ENCODE measurements at regions of chr19 and their contacts with region 1.

Region 1: GRCh38 chr19:488505-489417 is 7.5 kb upstream of the MADCAM1 start:
- DNase-seq: peak; percentile 88 to 99 (median 97)

Region 2: DNA sequence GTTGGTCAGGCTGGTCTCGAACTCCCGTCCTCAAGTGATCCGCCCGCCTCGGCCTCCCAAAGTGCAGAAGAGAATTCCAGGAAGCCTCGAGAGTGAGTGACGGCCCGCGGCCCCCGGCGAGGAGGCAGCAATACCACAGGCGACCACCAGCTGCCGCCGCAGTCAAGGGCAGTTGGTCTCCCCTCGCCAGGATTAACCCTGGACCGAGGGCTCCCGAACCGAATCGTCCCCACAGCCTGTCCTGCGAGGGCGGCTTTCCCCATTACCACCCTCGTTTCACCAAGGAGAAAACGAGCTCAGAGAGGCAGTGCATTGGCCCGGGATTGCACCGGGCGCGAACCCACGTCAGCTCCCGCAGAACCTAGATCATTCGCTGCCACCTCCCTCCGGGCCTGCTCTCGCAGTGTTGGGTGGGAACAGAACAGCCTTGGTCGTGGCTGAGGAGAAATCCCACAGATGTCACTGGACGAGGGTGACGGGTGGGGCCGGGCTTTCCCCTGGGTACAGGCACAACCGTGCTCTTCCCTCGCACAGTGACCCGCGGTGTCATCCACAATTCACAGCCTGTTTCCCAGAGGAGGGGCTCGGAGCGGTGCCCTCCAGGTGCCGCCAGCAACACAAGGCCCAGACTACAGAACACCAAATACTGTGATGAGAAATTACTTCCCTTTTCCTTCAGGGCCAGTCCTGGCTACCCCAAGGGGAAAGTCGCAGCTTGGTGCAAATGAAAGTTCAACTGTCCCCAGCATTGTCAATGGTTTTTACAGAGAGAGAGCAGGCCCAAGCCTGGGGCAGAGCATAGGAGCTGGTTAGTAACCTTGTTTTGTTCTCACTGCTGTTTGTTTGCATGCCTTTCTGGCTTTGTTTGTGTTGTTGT is 104.6 kb before region 1 on chr19:
- intact Hi-C with region 1: loop called (anchors 10 kb)
- DNase-seq: peak in 37 of 42 donors; percentile 16 to 79 (median 46)

Region 3: DNA sequence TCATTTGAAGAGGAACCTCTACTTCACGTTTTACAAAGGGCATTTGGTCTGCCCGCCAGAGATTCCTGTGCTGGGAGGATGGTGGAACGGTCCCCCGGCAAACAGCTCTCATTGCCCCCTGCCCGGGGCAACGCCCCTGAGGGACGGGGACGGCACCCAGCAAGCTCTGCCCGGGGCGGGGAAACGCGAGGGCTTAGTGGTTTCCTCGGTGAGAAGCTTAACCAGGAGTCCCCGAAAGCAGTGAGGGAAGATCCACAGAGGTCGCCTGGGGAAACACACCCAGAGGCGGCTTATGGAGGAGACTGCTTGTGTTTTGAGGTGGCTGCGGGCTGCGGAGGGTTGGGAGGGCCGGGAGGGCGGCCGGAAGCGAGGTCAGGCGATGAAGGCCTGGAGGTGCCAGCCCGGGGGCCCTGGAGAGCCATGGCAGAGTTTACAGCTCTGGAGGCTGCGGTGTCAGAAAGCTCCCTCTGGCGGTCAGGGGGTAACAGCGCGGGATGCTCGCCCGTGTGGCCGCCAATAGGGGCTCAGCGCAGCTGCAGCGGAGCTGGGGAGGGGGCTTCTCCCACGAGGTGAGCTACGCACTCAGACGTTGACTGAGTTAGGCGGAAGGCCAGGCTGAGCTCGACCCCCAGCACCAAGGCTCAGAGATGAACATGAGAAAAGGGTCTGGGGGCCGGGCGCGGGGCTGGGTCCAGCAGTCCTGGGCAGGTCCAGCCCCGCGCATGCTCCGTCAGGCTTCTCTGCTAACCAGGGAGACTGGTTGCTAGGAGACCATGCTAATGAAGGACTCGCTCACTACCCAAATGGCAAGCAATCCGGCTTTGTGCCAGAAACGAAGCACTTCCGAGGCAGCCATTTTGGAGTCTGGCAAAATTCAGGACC is 17.9 kb after region 1 on chr19:
- intact Hi-C with region 1: loop called (anchors 2 kb)
- DNase-seq: peak; percentile 94 to 100 (median 99)

Measured in head of caudate nucleus (tissue), 42 donors.